MCF 10A (cell line): ENCODE measurements at regions of chr3 and their contacts with region 1.

Region 1: GRCh38 chr3:98573181-98573728 is 20.2 kb downstream of the CPOX start:
- DNase-seq: peak; percentile 45
- H3K4me3 Mint-ChIP-seq: no peak overlapping the region
- H3K27ac Mint-ChIP-seq: peak overlapping the region; percentile 40
- H3K4me1 Mint-ChIP-seq: peaks cover 15% of the 10 kb centered on the region
- H3K27me3 Mint-ChIP-seq: no peaks in the 10 kb centered on the region
- CTCF ChIP-seq: peak; percentile 79

Region 2: DNA sequence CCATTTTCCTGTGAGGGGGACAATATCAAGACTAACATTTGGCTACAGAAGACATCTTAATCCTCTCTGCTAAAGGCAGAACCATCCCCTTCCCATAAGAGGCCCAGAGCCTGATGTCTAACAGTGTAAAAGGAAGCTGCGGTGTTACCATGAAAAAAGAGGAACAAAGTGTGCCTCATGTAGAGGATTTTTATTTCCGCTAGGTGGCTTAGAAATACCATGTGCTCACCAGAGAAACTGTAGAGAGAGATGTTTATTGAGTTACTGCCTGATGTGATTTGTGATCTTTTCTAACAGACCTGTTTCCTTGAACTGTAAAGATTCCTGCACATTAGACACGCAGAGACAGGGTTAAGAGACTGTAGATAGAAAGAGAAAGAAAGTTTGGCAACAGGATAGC is 384.7 kb before region 1 on chr3:
- CTCF ChIA-PET with region 1: no interaction called
- POLR2A ChIA-PET with region 1: no interaction called
- intact Hi-C with region 1: loop called (anchors 1 kb)
- DNase-seq: peak; percentile 29
- H3K4me3 Mint-ChIP-seq: no peak overlapping the region
- H3K27ac Mint-ChIP-seq: no peak overlapping the region
- H3K4me1 Mint-ChIP-seq: no peaks in the 10 kb centered on the region
- H3K27me3 Mint-ChIP-seq: no peaks in the 10 kb centered on the region
- CTCF ChIP-seq: peak; percentile 34

Region 3: GRCh38 chr3:98329392-98330124 is 243.7 kb before region 1 on chr3:
- CTCF ChIA-PET with region 1: interaction called, 12 read pairs
- POLR2A ChIA-PET with region 1: no interaction called
- intact Hi-C with region 1: loop called (anchors 1 kb)
- DNase-seq: peak; percentile 69
- H3K4me3 Mint-ChIP-seq: no peak overlapping the region
- H3K27ac Mint-ChIP-seq: no peak overlapping the region
- H3K4me1 Mint-ChIP-seq: no peaks in the 10 kb centered on the region
- H3K27me3 Mint-ChIP-seq: peaks cover 91% of the 10 kb centered on the region
- CTCF ChIP-seq: peak; percentile 75

Region 4: GRCh38 chr3:98359993-98360675 is 213.1 kb before region 1 on chr3:
- CTCF ChIA-PET with region 1: interaction called, 4 read pairs
- POLR2A ChIA-PET with region 1: no interaction called
- intact Hi-C with region 1: loop called (anchors 1 kb)
- DNase-seq: peak; percentile 68
- H3K4me3 Mint-ChIP-seq: no peak overlapping the region
- H3K27ac Mint-ChIP-seq: no peak overlapping the region
- H3K4me1 Mint-ChIP-seq: no peaks in the 10 kb centered on the region
- H3K27me3 Mint-ChIP-seq: no peaks in the 10 kb centered on the region
- CTCF ChIP-seq: peak; percentile 27

Region 5: GRCh38 chr3:98522244-98523090 is 50.8 kb before region 1 on chr3 and contains the start of gene CLDND1:
- CTCF ChIA-PET with region 1: interaction called, 8 read pairs
- POLR2A ChIA-PET with region 1: interaction called, 5 read pairs
- intact Hi-C with region 1: loop called (anchors 1 kb)
- DNase-seq: peak; percentile 98
- H3K4me3 Mint-ChIP-seq: peak within 1 kb of the TSS; percentile 85
- H3K27ac Mint-ChIP-seq: peak within 1 kb of the TSS; percentile 81
- H3K4me1 Mint-ChIP-seq: peaks cover 27% of the 10 kb centered on the region
- H3K27me3 Mint-ChIP-seq: no peaks in the 10 kb centered on the region
- CTCF ChIP-seq: no peak
- total RNA-seq, gene CLDND1: 128 and 173 TPM in 2 replicates

Region 6: DNA sequence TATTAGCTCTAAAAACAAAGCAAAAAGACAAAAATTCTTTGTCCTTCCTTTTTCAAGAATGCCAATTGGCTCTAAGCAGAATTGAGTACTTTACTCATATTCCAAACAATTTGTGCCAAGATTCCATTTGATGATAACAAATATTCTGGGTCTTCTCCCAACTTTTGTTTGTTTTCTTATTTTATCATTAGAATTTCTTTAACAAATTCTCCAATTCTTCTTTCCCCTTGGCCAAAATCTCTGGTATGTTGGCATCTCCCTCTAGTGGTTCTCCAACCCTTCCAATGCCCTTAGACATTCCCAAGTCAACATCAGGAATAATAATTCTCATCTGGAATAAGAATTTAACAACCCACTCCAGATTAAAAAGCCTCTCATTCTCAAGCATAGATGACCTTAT is 14.8 kb after region 1 on chr3:
- CTCF ChIA-PET with region 1: interaction called, 11 read pairs
- POLR2A ChIA-PET with region 1: interaction called, 3 read pairs
- intact Hi-C with region 1: no loop called
- DNase-seq: no peak
- H3K4me3 Mint-ChIP-seq: no peak overlapping the region
- H3K27ac Mint-ChIP-seq: no peak overlapping the region
- H3K4me1 Mint-ChIP-seq: peaks cover 33% of the 10 kb centered on the region
- H3K27me3 Mint-ChIP-seq: no peaks in the 10 kb centered on the region
- CTCF ChIP-seq: peak; percentile 30